PC-3 (cell line): ENCODE measurements at regions of chr21 and their contacts with region 1.

Region 1: DNA sequence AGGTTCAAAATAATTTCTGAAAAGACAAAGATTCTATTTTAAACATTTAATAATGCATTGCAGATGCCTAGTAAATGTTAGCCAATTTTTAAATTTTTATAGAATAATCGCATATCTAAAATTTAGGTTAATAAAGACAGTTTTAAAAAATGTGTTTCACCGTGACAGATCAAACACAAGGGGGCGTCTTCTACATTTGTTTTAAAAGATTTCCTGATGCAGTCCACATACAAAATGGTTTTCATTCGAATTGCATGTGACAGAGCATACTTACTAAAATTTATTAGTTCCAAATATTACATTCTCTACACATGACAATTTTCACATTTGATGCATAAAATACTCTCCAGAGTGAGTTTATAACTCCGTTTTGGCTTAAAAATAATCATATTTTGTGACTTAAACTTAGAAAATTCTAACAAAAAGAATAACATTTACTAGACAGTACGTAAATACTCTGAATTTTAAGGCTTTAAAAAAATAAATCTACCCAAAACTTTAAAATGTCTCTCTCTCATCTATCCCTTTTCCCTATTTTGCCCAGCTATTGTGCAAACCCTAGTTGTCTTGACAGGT is 75.5 kb downstream of the ADAMTS1 start:
- DNase-seq: peak; percentile 63
- ATAC-seq: peak; percentile 40; the same call in 1 of the 2 replicates
- H3K4me3 ChIP-seq: no peak overlapping the region
- H3K27ac ChIP-seq: no peak overlapping the region
- H3K4me1 ChIP-seq: no peaks in the 10 kb centered on the region
- H3K27me3 ChIP-seq: no peaks in the 10 kb centered on the region
- CTCF ChIP-seq: peak; percentile 79

Region 2: DNA sequence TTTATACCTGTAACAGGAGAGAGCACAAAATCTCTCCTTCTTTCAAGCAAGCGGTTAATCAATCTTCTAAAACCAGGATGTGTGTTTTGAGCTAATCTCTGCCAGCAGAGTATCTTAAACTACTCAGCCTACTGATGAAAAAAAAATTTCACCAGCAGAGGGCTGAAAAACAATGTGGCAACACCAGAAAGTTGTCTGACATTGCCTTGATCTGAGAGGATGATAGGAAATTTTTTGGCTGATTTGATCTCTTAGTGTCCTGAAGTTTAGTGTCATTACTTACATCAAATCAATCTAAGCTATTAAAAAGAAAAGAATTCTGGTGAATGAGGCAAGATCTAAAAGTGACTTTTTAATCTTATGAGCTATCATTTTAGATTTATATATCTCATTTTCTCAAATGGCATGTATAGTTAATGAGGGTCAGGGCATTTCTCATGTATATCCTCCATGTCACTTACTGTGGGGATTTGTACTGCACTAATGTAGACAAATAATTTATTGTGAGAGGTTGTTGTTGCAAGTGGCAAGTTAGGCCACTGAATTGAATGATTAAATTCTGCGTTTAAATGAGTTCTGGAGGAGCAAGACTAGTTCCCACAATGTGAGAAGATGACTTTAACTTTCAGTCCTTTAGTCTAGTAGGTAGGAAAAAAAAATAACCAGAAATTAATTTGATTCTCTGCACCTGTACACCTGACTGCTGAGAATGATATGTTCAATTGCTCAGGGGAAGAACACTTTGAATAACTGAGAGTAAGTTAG is 64.7 kb after region 1 on chr21:
- CTCF ChIA-PET with region 1: no interaction called
- POLR2A ChIA-PET with region 1: no interaction called
- intact Hi-C with region 1: loop called (anchors 2 kb)
- DNase-seq: peak; percentile 38
- ATAC-seq: peak; percentile 37
- H3K4me3 ChIP-seq: no peak overlapping the region
- H3K27ac ChIP-seq: 0 out of 2 replicates have a peak overlapping the region, but pooled peaks have one; percentile 18
- H3K4me1 ChIP-seq: peaks cover 15% of the 10 kb centered on the region; the same call in 1 of the 2 replicates
- H3K27me3 ChIP-seq: no peaks in the 10 kb centered on the region
- CTCF ChIP-seq: peak; percentile 48; the same call in 1 of the 2 replicates